BJ (cell line): ENCODE measurements at regions of chr17 and their contacts with region 1.

Region 1: DNA sequence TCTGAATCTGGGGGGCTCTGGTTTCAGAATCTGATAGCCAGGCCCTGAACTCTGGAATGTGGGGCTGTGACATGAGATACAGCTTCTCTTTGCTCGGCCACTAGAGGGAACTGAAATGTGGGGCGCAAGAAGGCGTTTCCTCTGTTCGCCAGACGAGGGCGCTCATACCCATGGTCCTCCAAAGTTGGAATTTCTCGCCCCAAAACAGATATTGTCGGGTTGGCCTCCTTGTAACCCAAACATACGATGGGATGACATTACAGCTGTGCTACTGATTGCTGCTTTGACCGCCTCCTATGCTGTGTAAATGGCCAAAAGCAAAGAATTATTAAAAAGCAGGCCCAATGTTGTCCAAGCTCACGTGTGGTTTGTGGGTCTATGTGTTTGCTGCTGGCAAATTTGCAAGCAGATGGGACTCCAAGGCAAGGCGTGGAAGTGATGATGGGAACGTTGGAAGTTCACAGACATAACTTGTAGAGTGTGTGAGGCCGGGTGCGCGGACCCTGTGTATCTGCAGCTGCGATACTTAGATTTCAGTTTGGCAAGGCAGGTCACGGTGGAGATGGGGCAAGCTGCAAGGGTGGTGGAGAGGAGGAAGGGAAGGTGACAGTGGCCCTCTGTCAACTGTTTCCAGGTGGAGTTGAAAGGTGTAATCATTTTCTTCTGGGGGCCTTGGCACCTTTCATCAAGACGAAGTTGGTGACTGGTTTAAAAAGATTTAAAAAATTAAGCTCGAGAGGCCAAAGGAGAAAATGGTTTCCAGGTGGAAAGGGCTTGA is 13.0 kb upstream of the MSI2 start:
- DNase-seq: no peak
- H3K4me3 ChIP-seq: no peak overlapping the region
- H3K27me3 ChIP-seq: peaks cover 2% of the 10 kb centered on the region
- CTCF ChIP-seq: peak; percentile 100

Region 2: GRCh38 chr17:57207411-57207810 is 35.9 kb before region 1 on chr17:
- CTCF ChIA-PET with region 1: interaction called, 10 read pairs
- POLR2A ChIA-PET with region 1: no interaction called
- DNase-seq: no peak
- H3K4me3 ChIP-seq: no peak overlapping the region
- H3K27me3 ChIP-seq: peaks cover 3% of the 10 kb centered on the region; the same call in 1 of the 2 replicates
- CTCF ChIP-seq: no peak

Region 3: DNA sequence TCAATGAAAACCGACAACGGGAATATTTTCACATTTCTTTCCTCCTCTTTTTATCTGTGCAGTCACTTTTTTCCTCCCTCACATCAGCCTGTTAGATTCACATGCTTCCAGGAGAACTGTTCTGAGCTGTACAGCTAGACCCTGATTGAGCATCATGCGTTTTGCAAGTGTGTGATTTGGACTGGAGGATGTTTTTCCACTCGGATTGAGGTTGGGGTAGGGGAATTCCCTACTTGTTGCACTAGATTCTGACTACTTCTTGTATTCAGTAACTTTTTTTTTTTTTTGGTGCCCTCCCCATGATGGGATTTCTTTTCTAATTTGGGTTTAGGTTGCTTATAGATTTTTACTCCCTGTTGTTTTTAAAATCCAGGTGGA is 17.7 kb after region 1 on chr17:
- CTCF ChIA-PET with region 1: interaction called, 15 read pairs
- POLR2A ChIA-PET with region 1: no interaction called
- DNase-seq: no peak
- H3K4me3 ChIP-seq: no peak overlapping the region
- H3K27me3 ChIP-seq: no peaks in the 10 kb centered on the region
- CTCF ChIP-seq: no peak

Region 4: DNA sequence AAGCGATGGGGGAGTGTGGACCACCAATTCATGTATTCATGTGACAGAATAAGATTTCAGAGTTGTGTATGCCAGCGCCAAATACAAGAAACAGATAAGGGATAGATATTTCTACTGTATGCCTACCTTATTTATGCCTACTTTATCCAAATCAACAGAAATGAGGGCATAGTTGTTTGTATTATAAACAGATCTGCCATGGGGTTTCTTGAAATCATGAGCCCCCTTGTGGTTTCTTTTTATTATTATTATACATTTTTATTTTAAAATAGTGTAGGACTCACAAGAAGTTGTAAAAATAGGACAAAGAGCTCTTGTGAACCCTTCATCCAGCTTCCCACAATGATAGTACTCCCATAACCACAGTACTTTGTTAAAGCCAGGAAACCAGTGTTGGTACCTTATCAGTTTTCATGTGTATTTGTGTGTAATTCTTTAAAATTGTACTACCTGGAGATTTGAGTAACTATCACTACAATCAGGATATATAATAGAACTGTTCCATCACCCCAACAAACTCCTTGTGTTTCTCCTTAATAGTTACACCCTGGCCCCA is 272.4 kb after region 1 on chr17:
- CTCF ChIA-PET with region 1: interaction called, 12 read pairs
- POLR2A ChIA-PET with region 1: no interaction called
- DNase-seq: no peak
- H3K4me3 ChIP-seq: no peak overlapping the region
- H3K27me3 ChIP-seq: no peaks in the 10 kb centered on the region
- CTCF ChIP-seq: no peak

Region 5: GRCh38 chr17:57739402-57740392 is 496.3 kb after region 1 on chr17:
- CTCF ChIA-PET with region 1: interaction called, 45 read pairs
- POLR2A ChIA-PET with region 1: no interaction called
- DNase-seq: no peak
- H3K4me3 ChIP-seq: no peak overlapping the region
- H3K27me3 ChIP-seq: peaks cover 3% of the 10 kb centered on the region
- CTCF ChIP-seq: peak; percentile 17; the same call in 1 of the 2 replicates

Region 6: GRCh38 chr17:57833179-57833939 is 590.0 kb after region 1 on chr17:
- CTCF ChIA-PET with region 1: interaction called, 12 read pairs
- POLR2A ChIA-PET with region 1: no interaction called
- DNase-seq: no peak
- H3K4me3 ChIP-seq: peak overlapping the region; percentile 38
- H3K27me3 ChIP-seq: no peaks in the 10 kb centered on the region
- CTCF ChIP-seq: peak; percentile 89